ENCODE measurements at regions of chr14 and their contacts with region 1.

Region 1: GRCh38 chr14:55129428-55130195 is 560 bp downstream of the LGALS3 start:
- DNase-seq: peak; percentile 83
- ATAC-seq: peak; percentile 83
- H3K4me3 Mint-ChIP-seq: peak overlapping the region; percentile 90
- H3K27ac Mint-ChIP-seq: peak overlapping the region; percentile 88
- H3K4me1 Mint-ChIP-seq: peaks cover 46% of the 10 kb centered on the region
- H3K27me3 Mint-ChIP-seq: peaks cover 2% of the 10 kb centered on the region
- CTCF ChIP-seq: no peak

Region 2: GRCh38 chr14:53613404-53614253 is 1516.0 kb before region 1 on chr14:
- CTCF ChIA-PET with region 1: no interaction called
- POLR2A ChIA-PET with region 1: no interaction called
- intact Hi-C with region 1: loop called (anchors 5 kb)
- DNase-seq: peak; percentile 59
- ATAC-seq: peak; percentile 93
- H3K4me3 Mint-ChIP-seq: peak overlapping the region; percentile 79
- H3K27ac Mint-ChIP-seq: peak overlapping the region; percentile 100
- H3K4me1 Mint-ChIP-seq: peaks cover 53% of the 10 kb centered on the region
- H3K27me3 Mint-ChIP-seq: no peaks in the 10 kb centered on the region
- CTCF ChIP-seq: no peak

Region 3: DNA sequence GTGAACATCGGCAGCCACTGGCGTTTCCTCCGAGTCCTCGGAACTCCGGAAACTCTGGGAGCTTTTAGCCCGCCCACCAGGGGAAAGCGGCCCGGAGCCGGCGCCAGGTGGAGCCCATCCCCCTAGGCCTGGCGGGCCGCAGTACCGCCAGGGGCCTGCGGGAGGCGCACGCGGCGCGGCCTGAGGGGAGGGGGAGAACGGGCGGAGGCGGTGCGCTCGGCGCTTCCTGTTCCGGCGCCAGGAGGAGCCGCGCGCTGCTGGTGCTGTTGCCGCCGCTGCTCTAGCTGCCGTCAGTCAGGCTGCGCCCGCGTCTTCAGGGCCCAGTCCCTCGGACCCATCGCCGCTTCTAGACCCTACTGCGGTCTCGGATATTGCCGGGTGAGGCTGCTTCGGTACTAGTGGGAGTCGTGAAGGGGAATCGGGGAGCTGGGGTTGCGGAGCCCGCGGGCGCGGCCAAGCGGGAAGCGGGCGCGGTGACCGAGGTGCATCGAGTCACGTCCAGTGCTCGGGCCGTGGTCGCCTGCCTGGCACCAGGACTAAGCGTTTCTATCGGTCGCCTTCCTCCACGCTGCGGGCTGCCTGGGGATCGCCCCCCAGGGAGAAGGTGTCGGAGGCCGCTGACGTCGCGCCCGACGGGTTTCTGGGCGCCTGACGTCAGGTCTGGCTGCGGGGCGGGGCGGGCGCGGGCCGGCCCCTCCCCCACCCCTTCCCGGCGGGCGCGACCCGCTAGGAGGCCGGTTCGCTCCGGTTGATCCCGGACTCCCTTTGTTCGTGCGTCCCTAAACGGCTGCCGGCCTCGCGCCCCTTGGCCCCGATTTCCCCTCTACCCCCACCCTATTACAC is 78.0 kb before region 1 on chr14 and contains the start of gene MAPK1IP1L:
- CTCF ChIA-PET with region 1: interaction called, 7 read pairs
- POLR2A ChIA-PET with region 1: interaction called, 37 read pairs
- intact Hi-C with region 1: loop called (anchors 1 kb)
- DNase-seq: peak; percentile 97
- ATAC-seq: peak; percentile 94
- H3K4me3 Mint-ChIP-seq: peak within 1 kb of the TSS; percentile 94
- H3K27ac Mint-ChIP-seq: peak within 1 kb of the TSS; percentile 95
- H3K4me1 Mint-ChIP-seq: peaks cover 39% of the 10 kb centered on the region
- H3K27me3 Mint-ChIP-seq: no peaks in the 10 kb centered on the region
- CTCF ChIP-seq: peak; percentile 75
- total RNA-seq, gene MAPK1IP1L: 119 and 130 TPM in 2 replicates

Region 4: GRCh38 chr14:55094321-55095157 is 35.1 kb before region 1 on chr14:
- CTCF ChIA-PET with region 1: interaction called, 3 read pairs
- POLR2A ChIA-PET with region 1: interaction called, 40 read pairs
- intact Hi-C with region 1: loop called (anchors 1 kb)
- DNase-seq: no peak
- ATAC-seq: no peak
- H3K4me3 Mint-ChIP-seq: no peak overlapping the region
- H3K27ac Mint-ChIP-seq: no peak overlapping the region
- H3K4me1 Mint-ChIP-seq: peaks cover 28% of the 10 kb centered on the region
- H3K27me3 Mint-ChIP-seq: no peaks in the 10 kb centered on the region
- CTCF ChIP-seq: no peak

Region 5: GRCh38 chr14:55146425-55146824 is 16.8 kb after region 1 on chr14:
- CTCF ChIA-PET with region 1: no interaction called
- POLR2A ChIA-PET with region 1: interaction called, 4 read pairs
- intact Hi-C with region 1: loop called (anchors 2 kb)
- DNase-seq: no peak
- ATAC-seq: no peak
- H3K4me3 Mint-ChIP-seq: no peak overlapping the region
- H3K27ac Mint-ChIP-seq: no peak overlapping the region
- H3K4me1 Mint-ChIP-seq: no peaks in the 10 kb centered on the region
- H3K27me3 Mint-ChIP-seq: no peaks in the 10 kb centered on the region
- CTCF ChIP-seq: no peak

Region 6: DNA sequence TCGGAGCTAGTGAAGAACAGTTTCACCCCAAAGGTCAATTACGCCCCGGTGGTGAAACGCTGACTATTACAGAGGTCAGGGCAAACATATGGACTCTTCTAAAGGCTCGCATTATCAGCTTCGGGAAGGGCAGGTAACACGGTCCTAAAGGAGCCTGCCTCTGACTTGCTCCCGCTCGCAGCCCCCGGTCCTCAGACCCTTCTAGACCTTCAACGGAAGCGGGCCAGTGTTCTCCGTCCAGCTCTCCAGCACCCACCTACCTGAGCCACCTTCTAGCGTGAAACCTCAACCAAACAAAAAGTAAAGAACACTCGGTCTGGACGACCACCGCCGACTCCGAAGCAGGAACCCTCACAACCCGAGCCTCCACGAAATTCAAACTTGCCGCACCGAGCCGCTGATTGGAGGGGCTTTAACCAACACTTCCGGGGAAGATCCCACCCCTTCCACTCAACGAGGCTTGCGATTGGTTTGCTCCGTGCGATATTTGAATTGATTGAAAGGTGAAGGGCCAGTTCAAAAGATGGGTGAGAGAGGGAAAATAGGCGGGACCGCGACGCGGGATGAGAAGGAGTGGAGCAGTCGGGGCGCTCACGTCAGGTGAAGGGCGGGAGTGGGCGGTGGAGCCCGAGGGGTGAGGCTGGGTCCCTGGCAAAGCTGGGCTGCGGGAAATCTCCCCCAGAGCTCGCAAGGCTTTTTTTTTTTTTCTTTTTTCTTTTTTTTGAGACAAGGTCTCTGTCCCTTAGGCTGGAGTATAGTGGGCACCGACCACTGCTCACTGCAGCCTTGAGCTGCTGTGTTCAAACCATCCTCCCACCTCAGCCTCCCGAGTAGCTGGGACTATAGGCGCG is 61.8 kb after region 1 on chr14 and contains the start of gene DLGAP5:
- CTCF ChIA-PET with region 1: no interaction called
- POLR2A ChIA-PET with region 1: no interaction called
- intact Hi-C with region 1: loop called (anchors 1 kb)
- DNase-seq: peak; percentile 68
- ATAC-seq: peak; percentile 99
- H3K4me3 Mint-ChIP-seq: peak within 1 kb of the TSS; percentile 84
- H3K27ac Mint-ChIP-seq: peak within 1 kb of the TSS; percentile 46
- H3K4me1 Mint-ChIP-seq: peaks cover 13% of the 10 kb centered on the region
- H3K27me3 Mint-ChIP-seq: no peaks in the 10 kb centered on the region
- CTCF ChIP-seq: no peak
- total RNA-seq, gene DLGAP5: 0.66 and 0.73 TPM in 2 replicates

Region 7: GRCh38 chr14:55398679-55399078 is 269.1 kb after region 1 on chr14:
- CTCF ChIA-PET with region 1: no interaction called
- POLR2A ChIA-PET with region 1: no interaction called
- intact Hi-C with region 1: no loop called
- DNase-seq: no peak
- ATAC-seq: no peak
- H3K4me3 Mint-ChIP-seq: no peak overlapping the region
- H3K27ac Mint-ChIP-seq: no peak overlapping the region
- H3K4me1 Mint-ChIP-seq: no peaks in the 10 kb centered on the region
- H3K27me3 Mint-ChIP-seq: no peaks in the 10 kb centered on the region
- CTCF ChIP-seq: no peak

Region 8: DNA sequence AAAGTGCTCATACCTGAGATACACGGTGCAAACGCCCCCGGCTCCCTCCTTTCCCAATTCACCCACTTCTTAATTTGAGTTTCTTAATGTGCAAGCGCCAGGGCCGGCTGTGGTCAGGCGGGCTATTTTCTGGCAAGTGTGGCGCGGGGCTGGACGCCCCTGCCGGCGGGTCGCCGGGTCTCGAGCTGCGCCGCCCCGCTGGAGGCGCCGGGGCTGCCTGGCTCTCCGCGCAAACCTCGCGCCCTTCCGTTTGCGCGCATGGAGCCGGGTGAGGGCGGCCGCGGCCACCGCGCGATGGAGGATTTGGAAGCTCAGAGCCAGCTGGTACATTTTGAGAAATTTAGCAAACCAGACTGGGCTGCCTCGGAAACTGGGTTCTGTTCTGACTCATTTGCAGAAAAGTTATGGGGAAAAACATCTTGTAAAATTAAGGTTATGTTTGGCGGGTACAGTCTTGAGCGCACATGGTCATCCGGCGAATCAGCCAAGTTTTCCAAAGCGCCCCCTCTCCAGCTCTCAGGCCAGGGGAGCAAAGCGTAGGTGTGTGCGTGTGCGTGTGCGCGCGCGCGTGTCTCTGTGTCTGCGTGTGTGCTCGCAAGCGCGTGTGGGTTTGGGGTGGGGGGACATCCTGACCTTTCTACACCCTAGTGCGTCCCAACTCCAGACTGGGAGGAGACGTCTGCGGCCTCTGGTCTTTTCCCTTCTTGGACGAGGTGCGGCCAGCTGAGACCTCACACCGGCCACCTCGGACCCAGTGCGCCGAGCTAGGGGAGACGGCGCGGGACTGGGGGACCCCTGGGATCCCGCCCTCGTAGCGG is 1687.2 kb after region 1 on chr14:
- CTCF ChIA-PET with region 1: no interaction called
- POLR2A ChIA-PET with region 1: no interaction called
- intact Hi-C with region 1: no loop called
- DNase-seq: no peak
- ATAC-seq: no peak
- H3K4me3 Mint-ChIP-seq: no peak overlapping the region
- H3K27ac Mint-ChIP-seq: no peak overlapping the region
- H3K4me1 Mint-ChIP-seq: peaks cover 1% of the 10 kb centered on the region
- H3K27me3 Mint-ChIP-seq: peaks cover 60% of the 10 kb centered on the region
- CTCF ChIP-seq: no peak